BJ (cell line): ENCODE measurements at regions of chr20 and their contacts with region 1.

Region 1: GRCh38 chr20:37165031-37165430 is 14.1 kb upstream of the RPN2 start:
- DNase-seq: no peak
- H3K4me3 ChIP-seq: no peak overlapping the region
- H3K27me3 ChIP-seq: peaks cover 3% of the 10 kb centered on the region; the same call in 1 of the 2 replicates
- CTCF ChIP-seq: no peak

Region 2: DNA sequence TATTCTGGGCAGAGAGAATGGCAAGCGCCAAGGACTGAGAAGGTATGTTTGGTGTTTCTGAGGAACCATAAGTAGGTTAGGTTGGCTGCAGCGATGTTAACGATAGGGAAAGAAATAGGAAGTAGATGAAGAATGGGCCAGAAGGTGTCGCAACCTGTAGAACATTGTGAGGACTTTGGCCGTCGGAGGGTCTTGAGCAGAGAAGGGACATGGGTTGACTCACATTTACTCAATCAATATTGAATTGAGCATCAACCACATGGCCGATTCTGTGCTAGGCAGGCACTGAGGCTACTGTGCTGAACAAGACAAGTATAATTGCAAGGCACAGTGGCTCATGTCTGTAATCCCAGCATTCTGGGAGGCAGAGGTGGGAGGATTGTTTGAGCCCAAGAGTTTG is 12.7 kb before region 1 on chr20:
- CTCF ChIA-PET with region 1: no interaction called
- POLR2A ChIA-PET with region 1: no interaction called
- DNase-seq: no peak
- H3K4me3 ChIP-seq: no peak overlapping the region
- H3K27me3 ChIP-seq: no peaks in the 10 kb centered on the region
- CTCF ChIP-seq: no peak

Region 3: GRCh38 chr20:37178839-37179670 is 14.0 kb after region 1 on chr20 and contains the starts of genes MROH8 and RPN2:
- CTCF ChIA-PET with region 1: interaction called, 17 read pairs
- POLR2A ChIA-PET with region 1: interaction called, 4 read pairs
- DNase-seq: peak; percentile 83
- H3K4me3 ChIP-seq: peak within 1 kb of the TSS; percentile 61
- H3K27me3 ChIP-seq: no peaks in the 10 kb centered on the region
- CTCF ChIP-seq: no peak
- polyA plus RNA-seq, gene MROH8: 2.4 and 2.7 TPM in 2 replicates
- polyA plus RNA-seq, gene RPN2: 647 and 834 TPM in 2 replicates